ENCODE measurements at regions of chr11 and their contacts with region 1.

Region 1: GRCh38 chr11:117327567-117328374 is at the start of gene CEP164:
- DNase-seq: peak; percentile 91
- ATAC-seq: peak; percentile 98
- H3K4me3 ChIP-seq: peak within 1 kb of the TSS; percentile 71 to 96
- H3K27ac ChIP-seq: peak within 1 kb of the TSS; percentile 90
- H3K4me1 ChIP-seq: peaks cover 9% of the 10 kb centered on the region
- H3K27me3 ChIP-seq: no peaks in the 10 kb centered on the region
- CTCF ChIP-seq: no peak
- total RNA-seq, gene CEP164: 75.4 TPM

Region 2: GRCh38 chr11:116895048-116895757 is 432.6 kb before region 1 on chr11:
- CTCF ChIA-PET with region 1: interaction called, 16 read pairs
- POLR2A ChIA-PET with region 1: no interaction called
- in situ Hi-C with region 1: no loop called
- intact Hi-C with region 1: no loop called
- DNase-seq: no peak
- ATAC-seq: peak; percentile 75
- H3K4me3 ChIP-seq: no peak overlapping the region
- H3K27ac ChIP-seq: no peak overlapping the region
- H3K4me1 ChIP-seq: no peaks in the 10 kb centered on the region
- H3K27me3 ChIP-seq: no peaks in the 10 kb centered on the region
- CTCF ChIP-seq: peak; percentile 54